ENCODE measurements at regions of chr1 and their contacts with region 1.

Region 1: DNA sequence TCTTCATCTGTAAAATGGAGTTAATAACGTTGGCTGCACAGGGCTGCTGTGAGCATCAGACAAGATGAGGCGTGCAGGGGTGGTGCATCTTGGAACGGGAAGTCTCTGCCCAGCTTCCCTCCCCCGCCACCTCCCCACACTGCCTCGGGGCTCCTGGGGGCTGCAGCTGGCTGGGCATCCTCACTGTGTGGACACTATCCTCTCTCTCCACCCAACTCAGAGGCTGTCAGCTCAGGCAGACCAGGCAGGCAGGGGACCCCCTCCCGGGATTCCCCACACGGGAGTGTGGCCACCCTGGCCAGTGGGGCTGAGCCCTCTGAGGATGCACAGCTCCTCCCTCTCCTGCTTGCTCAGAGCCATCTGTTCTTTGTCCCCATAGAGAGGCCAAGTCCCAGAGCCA is 122.7 kb downstream of the CCDC185 start:
- DNase-seq: peak; percentile 26
- H3K4me3 Mint-ChIP-seq: no peak overlapping the region
- H3K27ac Mint-ChIP-seq: peak overlapping the region; percentile 74
- H3K4me1 Mint-ChIP-seq: peaks cover 32% of the 10 kb centered on the region
- H3K27me3 Mint-ChIP-seq: no peaks in the 10 kb centered on the region

Region 2: GRCh38 chr1:223401873-223402789 is 113.8 kb before region 1 on chr1:
- CTCF ChIA-PET with region 1: no interaction called
- intact Hi-C with region 1: loop called (anchors 5 kb)
- DNase-seq: peak; percentile 26
- H3K4me3 Mint-ChIP-seq: no peak overlapping the region
- H3K27ac Mint-ChIP-seq: no peak overlapping the region
- H3K4me1 Mint-ChIP-seq: peaks cover 26% of the 10 kb centered on the region
- H3K27me3 Mint-ChIP-seq: no peaks in the 10 kb centered on the region

Region 3: GRCh38 chr1:223423641-223424233 is 92.2 kb before region 1 on chr1:
- CTCF ChIA-PET with region 1: no interaction called
- intact Hi-C with region 1: no loop called
- DNase-seq: no peak
- H3K4me3 Mint-ChIP-seq: no peak overlapping the region
- H3K27ac Mint-ChIP-seq: no peak overlapping the region
- H3K4me1 Mint-ChIP-seq: peaks cover 3% of the 10 kb centered on the region
- H3K27me3 Mint-ChIP-seq: no peaks in the 10 kb centered on the region

Region 4: GRCh38 chr1:223525957-223526356 is 10.0 kb after region 1 on chr1:
- CTCF ChIA-PET with region 1: interaction called, 3 read pairs
- intact Hi-C with region 1: loop called (anchors 1 kb)
- DNase-seq: peak; percentile 64
- H3K4me3 Mint-ChIP-seq: no peak overlapping the region
- H3K27ac Mint-ChIP-seq: no peak overlapping the region
- H3K4me1 Mint-ChIP-seq: peaks cover 18% of the 10 kb centered on the region
- H3K27me3 Mint-ChIP-seq: no peaks in the 10 kb centered on the region

Measured in activated naive CD4-positive, alpha-beta T cell treated with anti-CD3 and anti-CD28 coated beads for 36 hours (primary cell).